ENCODE measurements at regions of chr3 and their contacts with region 1.

Region 1: GRCh38 chr3:9915254-9916141 is 1.4 kb upstream of the IL17RC start:
- DNase-seq: peak; percentile 51
- H3K4me3 ChIP-seq: peak overlapping the region; percentile 39 to 41
- H3K27ac ChIP-seq: peak overlapping the region; percentile 92 to 94
- H3K4me1 ChIP-seq: peaks cover 12% of the 10 kb centered on the region
- H3K27me3 ChIP-seq: no peaks in the 10 kb centered on the region
- CTCF ChIP-seq: peak; percentile 22 to 73 (median 42)
- POLR2A ChIP-seq: no peak

Region 2: DNA sequence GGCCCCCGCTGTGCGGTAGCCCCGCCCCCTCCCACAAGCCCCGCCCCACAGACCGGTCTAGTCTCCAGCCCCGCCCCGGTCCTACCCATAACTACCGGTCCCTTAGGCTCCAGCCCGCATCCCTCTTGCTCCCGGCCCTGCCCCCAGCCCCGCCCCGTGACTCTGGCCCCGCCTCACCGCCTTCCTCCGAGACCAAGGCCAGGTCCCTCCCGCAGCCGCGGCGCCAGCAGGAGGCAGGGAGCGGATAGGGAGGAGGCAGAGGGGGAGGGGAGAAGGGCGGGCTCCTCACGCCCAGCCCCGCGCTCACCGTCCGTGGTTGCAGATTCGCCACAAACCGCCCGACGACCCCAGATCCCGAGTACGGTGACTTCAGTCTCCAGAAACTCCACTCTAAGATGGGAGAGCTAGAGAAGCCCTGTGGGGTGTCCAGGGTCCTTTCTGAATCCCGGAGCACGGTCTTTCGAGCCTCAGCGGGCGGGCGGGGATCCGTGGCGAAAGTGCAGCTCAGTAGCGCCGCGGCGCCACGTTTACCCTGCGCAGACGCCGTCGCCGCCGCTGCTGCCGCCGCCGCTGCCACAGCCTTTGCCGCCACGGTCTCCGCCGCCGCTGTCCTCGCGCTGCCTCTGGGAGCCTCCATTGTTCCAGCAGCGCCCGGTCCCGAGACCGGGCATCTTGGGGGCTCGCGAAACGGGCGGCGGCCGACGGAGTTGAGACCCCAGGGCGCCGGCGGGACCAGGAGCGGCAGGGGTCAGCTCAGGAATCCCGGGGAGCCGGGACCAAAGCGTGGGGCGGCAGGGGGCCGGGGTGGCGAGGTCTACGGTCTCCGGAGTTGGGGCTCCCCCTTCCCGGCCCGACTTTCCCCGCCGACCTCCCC is 184.1 kb before region 1 on chr3 and contains the start of gene BRPF1:
- intact Hi-C with region 1: loop called (anchors 10 kb)
- DNase-seq: peak; percentile 99
- H3K4me3 ChIP-seq: peak within 1 kb of the TSS; percentile 97 to 98
- H3K27ac ChIP-seq: peak within 1 kb of the TSS; percentile 96 to 97
- H3K4me1 ChIP-seq: peaks cover 14% of the 10 kb centered on the region
- H3K27me3 ChIP-seq: no peaks in the 10 kb centered on the region
- CTCF ChIP-seq: peak; percentile 18 to 39 (median 30)
- POLR2A ChIP-seq: no peak
- total RNA-seq, gene BRPF1: 14.2 to 43.5 TPM

Region 3: GRCh38 chr3:9843715-9844438 is 71.6 kb before region 1 on chr3 and contains the start of gene RPUSD3:
- intact Hi-C with region 1: loop called (anchors 2 kb)
- DNase-seq: peak; percentile 98
- H3K4me3 ChIP-seq: peak within 1 kb of the TSS; percentile 52 to 59
- H3K27ac ChIP-seq: peak within 1 kb of the TSS; percentile 83 to 85
- H3K4me1 ChIP-seq: no peaks in the 10 kb centered on the region
- H3K27me3 ChIP-seq: no peaks in the 10 kb centered on the region
- CTCF ChIP-seq: peak in 1 of 4 experiments; percentile 3
- POLR2A ChIP-seq: peak; percentile 83
- total RNA-seq, gene RPUSD3: 40.9 to 44.6 TPM

Region 4: DNA sequence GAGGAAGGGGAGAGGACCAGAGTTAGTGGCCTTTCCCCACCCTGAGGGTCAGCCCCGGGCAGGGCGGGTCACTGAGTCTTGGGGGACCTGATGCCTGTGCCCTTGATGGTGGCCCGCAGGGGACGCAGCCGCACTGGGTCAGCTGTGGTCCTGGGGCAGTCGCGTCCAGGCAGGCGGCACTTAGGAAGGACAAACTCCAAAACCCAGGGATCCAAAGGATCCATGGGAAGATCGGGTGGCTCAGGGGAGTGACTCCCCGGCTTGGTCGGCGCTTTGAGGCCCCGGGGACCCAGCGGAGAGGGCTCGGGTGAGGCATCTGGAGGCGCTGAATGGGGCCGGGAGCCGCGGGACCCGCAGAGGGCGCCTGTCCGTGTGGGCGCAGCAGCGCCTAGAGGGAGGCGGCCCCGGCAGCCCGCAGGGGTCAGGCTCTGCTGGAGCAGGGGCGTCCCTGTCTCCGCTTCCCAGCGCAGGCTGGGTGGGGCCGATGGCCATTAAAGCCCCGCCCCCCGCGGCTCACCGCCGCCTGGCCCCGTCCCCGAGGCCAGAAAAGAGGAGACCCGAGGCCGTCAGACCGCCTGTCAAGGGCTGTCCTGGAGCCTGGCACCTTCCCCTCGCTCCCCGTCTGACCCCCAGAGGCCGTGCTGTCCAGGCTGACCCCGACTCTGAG is 53.0 kb before region 1 on chr3:
- intact Hi-C with region 1: loop called (anchors 1 kb)
- DNase-seq: no peak
- H3K4me3 ChIP-seq: peak overlapping the region; percentile 12 to 23
- H3K27ac ChIP-seq: peak overlapping the region; percentile 35 to 50
- H3K4me1 ChIP-seq: no peaks in the 10 kb centered on the region
- H3K27me3 ChIP-seq: no peaks in the 10 kb centered on the region
- CTCF ChIP-seq: peak in 3 of 4 experiments; percentile 7 to 36 (median 31)
- POLR2A ChIP-seq: no peak

Region 5: GRCh38 chr3:9890249-9891071 is 25.0 kb before region 1 on chr3 and contains the start of gene JAGN1:
- intact Hi-C with region 1: loop called (anchors 2 kb)
- DNase-seq: peak; percentile 84
- H3K4me3 ChIP-seq: peak within 1 kb of the TSS; percentile 92
- H3K27ac ChIP-seq: peak within 1 kb of the TSS; percentile 94 to 95
- H3K4me1 ChIP-seq: no peaks in the 10 kb centered on the region
- H3K27me3 ChIP-seq: no peaks in the 10 kb centered on the region
- CTCF ChIP-seq: peak in 1 of 4 experiments; percentile 14
- POLR2A ChIP-seq: peak; percentile 89
- total RNA-seq, gene JAGN1: 37.0 to 61.5 TPM

Region 6: GRCh38 chr3:9946112-9947024 is 30.9 kb after region 1 on chr3:
- intact Hi-C with region 1: loop called (anchors 1 kb)
- DNase-seq: peak; percentile 79
- H3K4me3 ChIP-seq: peak overlapping the region; percentile 31 to 44
- H3K27ac ChIP-seq: peak overlapping the region; percentile 77 to 81
- H3K4me1 ChIP-seq: no peaks in the 10 kb centered on the region
- H3K27me3 ChIP-seq: no peaks in the 10 kb centered on the region
- CTCF ChIP-seq: peak; percentile 43 to 93 (median 66)
- POLR2A ChIP-seq: peak; percentile 55